ENCODE measurements at regions of chr13 and their contacts with region 1.

Region 1: DNA sequence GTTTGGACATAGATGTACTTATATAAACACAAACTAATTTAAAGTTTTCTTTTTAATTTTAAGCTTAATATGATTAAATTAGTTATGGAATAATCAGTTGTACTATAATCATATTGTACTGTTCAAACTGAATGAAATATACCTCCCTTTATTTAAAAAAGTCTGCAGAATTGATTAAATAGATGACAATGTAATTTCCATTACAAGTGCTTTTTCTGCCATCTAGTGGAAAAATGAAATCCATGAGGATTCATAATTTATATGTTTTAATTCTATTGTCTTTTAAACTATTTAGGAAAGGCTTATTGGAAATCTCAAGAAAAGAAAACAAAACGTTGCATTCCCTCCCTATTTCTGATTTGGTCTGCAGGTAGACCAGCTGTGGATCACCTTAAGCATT is 30.9 kb downstream of the MZT1 start:
- DNase-seq: no peak
- ATAC-seq: no peak
- H3K4me3 ChIP-seq: no peak overlapping the region
- H3K27ac ChIP-seq: no peak overlapping the region
- H3K4me1 ChIP-seq: no peaks in the 10 kb centered on the region
- H3K27me3 ChIP-seq: peaks cover 0 to 10% (median 0%) of the 10 kb centered on the region in 9 donors
- CTCF ChIP-seq: peak in 11 of 12 donors; percentile 6 to 60 (median 34)
- POLR2A ChIP-seq: no peak

Region 2: DNA sequence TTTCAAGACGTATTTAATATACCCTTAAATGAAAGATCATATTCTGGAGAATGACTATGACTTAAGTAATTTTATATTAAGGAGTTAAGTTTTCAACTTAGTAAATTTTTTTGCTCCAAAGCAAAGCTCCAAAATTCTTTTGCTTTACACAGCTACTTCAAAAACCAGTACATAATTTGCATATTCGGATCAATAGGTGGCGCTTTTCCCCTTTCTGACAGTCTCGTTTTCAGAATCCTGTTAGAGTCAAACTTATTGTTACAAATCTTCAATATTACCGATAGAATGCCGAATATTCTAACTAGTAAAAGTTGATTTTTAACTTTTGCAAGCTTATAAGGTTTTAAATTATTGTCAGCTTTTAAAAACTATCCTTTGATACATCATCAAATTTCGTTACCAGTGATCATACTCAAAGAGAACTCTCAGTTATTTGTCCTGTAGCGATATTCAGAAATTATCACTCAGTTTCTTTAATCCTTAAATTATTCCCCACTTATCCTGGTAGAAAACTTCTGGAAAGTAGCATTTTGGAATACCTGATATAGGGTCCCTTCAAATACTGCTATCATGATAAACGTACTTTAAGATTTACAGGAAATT is 1735.6 kb before region 1 on chr13:
- intact Hi-C with region 1: loop called in 1 of 10 experiments (anchors 10 kb)
- DNase-seq: no peak
- ATAC-seq: no peak
- H3K4me3 ChIP-seq: no peak overlapping the region
- H3K27ac ChIP-seq: no peak overlapping the region
- H3K4me1 ChIP-seq: no peaks in the 10 kb centered on the region
- H3K27me3 ChIP-seq: no peaks in the 10 kb centered on the region
- CTCF ChIP-seq: peak; percentile 31 to 72 (median 54)
- POLR2A ChIP-seq: no peak

Region 3: GRCh38 chr13:72643311-72643989 is 53.1 kb before region 1 on chr13:
- intact Hi-C with region 1: loop called in 2 of 10 experiments (anchors 5 kb)
- DNase-seq: peak in 2 of 5 donors; percentile 18 to 47
- ATAC-seq: no peak
- H3K4me3 ChIP-seq: no peak overlapping the region
- H3K27ac ChIP-seq: no peak overlapping the region
- H3K4me1 ChIP-seq: no peaks in the 10 kb centered on the region
- H3K27me3 ChIP-seq: no peaks in the 10 kb centered on the region
- CTCF ChIP-seq: peak; percentile 34 to 73 (median 48)
- POLR2A ChIP-seq: no peak

Region 4: DNA sequence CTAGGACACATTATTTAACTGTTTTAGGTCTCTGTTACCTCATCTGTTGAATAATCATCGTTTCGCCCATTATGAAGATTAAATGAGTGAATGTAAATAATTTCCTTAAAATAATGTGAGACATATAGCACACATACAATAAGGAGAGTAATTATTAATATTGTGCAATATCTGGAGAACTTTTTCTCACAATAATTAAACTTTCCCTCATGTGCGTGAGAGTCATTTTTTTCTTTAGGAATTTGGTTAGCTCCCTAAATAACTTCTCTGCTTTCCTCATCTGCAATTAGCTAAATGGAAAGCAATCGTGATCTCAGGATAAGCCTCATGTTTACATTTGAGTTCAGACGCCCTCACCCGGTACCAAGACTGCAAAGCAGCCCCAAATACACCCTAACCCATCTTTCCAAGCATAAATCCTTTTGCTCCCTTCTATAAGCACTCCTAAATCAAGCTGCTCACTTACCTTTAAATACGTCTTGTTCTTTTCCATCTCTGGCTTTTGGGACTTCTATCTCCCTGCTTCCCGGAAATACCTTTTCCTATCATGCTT is 48.0 kb before region 1 on chr13:
- intact Hi-C with region 1: loop called in 2 of 10 experiments (anchors 5 kb)
- DNase-seq: no peak
- ATAC-seq: no peak
- H3K4me3 ChIP-seq: no peak overlapping the region
- H3K27ac ChIP-seq: no peak overlapping the region
- H3K4me1 ChIP-seq: no peaks in the 10 kb centered on the region
- H3K27me3 ChIP-seq: no peaks in the 10 kb centered on the region
- CTCF ChIP-seq: no peak
- POLR2A ChIP-seq: no peak

Measured in heart left ventricle (tissue), 16 donors.